CD8-positive, alpha-beta T cell (primary cell): ENCODE measurements at regions of chr14 and their contacts with region 1.

Region 1: GRCh38 chr14:100192672-100193416 is 33.4 kb upstream of the DEGS2 start:
- DNase-seq: peak; percentile 99 to 100 (median 99)
- ATAC-seq: peak; percentile 98
- H3K4me3 ChIP-seq: peak overlapping the region; percentile 54 to 57
- H3K4me3 Mint-ChIP-seq: peak overlapping the region; percentile 63
- H3K27ac ChIP-seq: peak overlapping the region; percentile 48 to 90
- H3K27ac Mint-ChIP-seq: peak overlapping the region; percentile 90
- H3K4me1 ChIP-seq: peaks cover 12% of the 10 kb centered on the region
- H3K4me1 Mint-ChIP-seq: peaks cover 10% of the 10 kb centered on the region
- H3K27me3 ChIP-seq: no peaks in the 10 kb centered on the region
- H3K27me3 Mint-ChIP-seq: no peaks in the 10 kb centered on the region
- CTCF ChIP-seq: peak; percentile 81

Region 2: DNA sequence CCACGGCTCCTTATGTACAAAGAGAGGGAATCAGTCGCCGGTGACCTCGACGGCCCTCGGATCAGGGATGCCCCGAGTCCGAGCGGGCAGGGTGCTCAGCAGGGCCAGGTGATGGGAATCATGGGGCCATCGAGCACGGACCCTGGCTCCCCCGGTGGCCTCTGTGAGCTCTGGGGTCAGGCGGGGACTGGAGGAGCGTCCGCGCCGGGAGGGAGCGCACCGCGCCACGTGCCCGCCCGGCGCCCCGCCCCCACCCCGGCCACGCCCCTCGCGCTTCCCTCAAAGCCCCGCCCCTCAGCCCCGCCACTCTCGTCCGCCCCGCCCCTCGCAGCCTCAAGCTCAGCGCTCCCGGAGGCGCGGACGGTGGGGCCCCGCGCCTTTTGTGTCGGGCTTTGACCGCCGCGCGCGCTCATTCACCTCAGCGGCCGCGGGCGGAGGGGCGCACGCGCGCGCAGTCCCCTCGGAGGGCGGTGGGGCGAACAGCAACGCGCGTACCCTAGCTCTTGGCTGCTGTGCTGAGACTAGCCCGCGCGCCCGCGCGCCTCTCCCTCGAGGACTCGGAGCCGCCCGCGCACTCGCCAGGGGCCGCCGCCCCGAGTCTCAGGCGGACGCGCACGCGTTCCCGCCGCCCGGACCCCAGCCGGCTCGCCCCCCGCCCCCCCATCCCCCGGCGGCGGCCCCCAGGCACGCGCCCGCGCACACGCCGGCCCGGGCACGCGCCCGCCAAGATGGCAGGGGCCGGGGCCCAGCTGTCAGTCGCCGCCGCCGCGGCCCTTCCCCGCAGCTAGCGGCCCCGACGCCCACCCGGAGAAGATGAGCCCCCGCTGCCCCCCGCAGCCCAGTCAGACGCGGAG is 221.5 kb before region 1 on chr14:
- CTCF ChIA-PET with region 1: interaction called, 10 read pairs
- POLR2A ChIA-PET with region 1: no interaction called
- intact Hi-C with region 1: no loop called
- DNase-seq: peak; percentile 62 to 89 (median 78)
- ATAC-seq: peak; percentile 92
- H3K4me3 ChIP-seq: peak overlapping the region; percentile 35 to 67
- H3K4me3 Mint-ChIP-seq: peak overlapping the region; percentile 78
- H3K27ac ChIP-seq: no peak overlapping the region
- H3K27ac Mint-ChIP-seq: no peak overlapping the region
- H3K4me1 ChIP-seq: peaks cover 11% of the 10 kb centered on the region
- H3K4me1 Mint-ChIP-seq: peaks cover 12% of the 10 kb centered on the region
- H3K27me3 ChIP-seq: no peaks in the 10 kb centered on the region
- H3K27me3 Mint-ChIP-seq: peaks cover 5% of the 10 kb centered on the region
- CTCF ChIP-seq: no peak

Region 3: DNA sequence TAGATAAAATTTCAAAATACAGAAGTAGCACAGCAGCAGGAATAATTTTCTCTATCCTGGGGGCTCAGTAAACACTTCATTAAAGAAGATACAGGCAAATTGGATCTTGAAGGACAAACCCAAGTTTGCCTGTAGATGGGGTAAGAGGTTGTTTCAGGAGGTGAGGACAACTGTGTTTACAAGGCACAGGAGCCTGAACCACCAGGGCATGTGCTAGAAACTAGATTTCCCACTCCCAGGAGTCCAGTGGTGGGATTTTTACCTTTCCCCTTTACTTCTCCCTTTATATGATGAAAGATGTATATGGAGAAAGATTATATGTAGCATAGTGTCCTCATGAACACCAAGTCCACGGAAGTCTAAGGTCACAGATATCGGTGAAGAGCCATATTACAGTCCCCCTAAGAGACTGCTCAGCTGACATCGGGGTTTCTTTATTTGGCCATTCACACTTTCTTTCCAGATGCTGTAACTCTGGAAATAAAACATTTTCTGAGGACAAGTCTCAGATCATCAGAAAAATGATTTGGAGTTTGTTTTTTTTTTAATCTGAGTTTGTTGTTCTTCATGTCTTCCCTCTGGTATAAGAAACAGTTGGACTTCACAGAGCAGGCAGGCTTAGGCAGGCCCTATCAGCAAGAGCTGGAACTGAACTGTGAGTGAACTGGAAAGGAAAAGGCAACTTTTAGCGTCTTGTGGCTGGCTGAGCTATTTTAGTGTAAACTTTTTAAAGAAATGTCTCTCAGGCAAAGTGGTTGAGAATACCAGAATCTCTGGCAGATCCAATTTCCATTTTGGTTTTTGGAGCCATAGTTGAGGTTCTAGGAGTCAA is 135.7 kb before region 1 on chr14:
- CTCF ChIA-PET with region 1: interaction called, 7 read pairs
- POLR2A ChIA-PET with region 1: interaction called, 3 read pairs
- intact Hi-C with region 1: loop called (anchors 1 to 2 kb)
- DNase-seq: peak in 4 of 9 experiments; percentile 35 to 84 (median 62)
- ATAC-seq: peak; percentile 71
- H3K4me3 ChIP-seq: no peak overlapping the region
- H3K4me3 Mint-ChIP-seq: peak overlapping the region; percentile 21
- H3K27ac ChIP-seq: peak overlapping the region in 1 of 2 experiments; percentile 12
- H3K27ac Mint-ChIP-seq: peak overlapping the region; percentile 94
- H3K4me1 ChIP-seq: peaks cover 57% of the 10 kb centered on the region
- H3K4me1 Mint-ChIP-seq: peaks cover 54% of the 10 kb centered on the region
- H3K27me3 ChIP-seq: no peaks in the 10 kb centered on the region
- H3K27me3 Mint-ChIP-seq: no peaks in the 10 kb centered on the region
- CTCF ChIP-seq: peak; percentile 77

Region 4: GRCh38 chr14:100108042-100108825 is 84.6 kb before region 1 on chr14:
- CTCF ChIA-PET with region 1: interaction called, 19 read pairs
- POLR2A ChIA-PET with region 1: no interaction called
- intact Hi-C with region 1: loop called (anchors 1 to 2 kb)
- DNase-seq: peak; percentile 80 to 93 (median 88)
- ATAC-seq: peak; percentile 50
- H3K4me3 ChIP-seq: no peak overlapping the region
- H3K4me3 Mint-ChIP-seq: peak overlapping the region; percentile 49
- H3K27ac ChIP-seq: peak overlapping the region; percentile 21 to 59
- H3K27ac Mint-ChIP-seq: peak overlapping the region; percentile 99
- H3K4me1 ChIP-seq: peaks cover 83% of the 10 kb centered on the region
- H3K4me1 Mint-ChIP-seq: peaks cover 88% of the 10 kb centered on the region
- H3K27me3 ChIP-seq: no peaks in the 10 kb centered on the region
- H3K27me3 Mint-ChIP-seq: no peaks in the 10 kb centered on the region
- CTCF ChIP-seq: peak; percentile 83

Region 5: GRCh38 chr14:100203949-100204834 is 11.3 kb after region 1 on chr14:
- CTCF ChIA-PET with region 1: interaction called, 19 read pairs
- POLR2A ChIA-PET with region 1: no interaction called
- intact Hi-C with region 1: no loop called
- DNase-seq: no peak
- ATAC-seq: no peak
- H3K4me3 ChIP-seq: no peak overlapping the region
- H3K4me3 Mint-ChIP-seq: no peak overlapping the region
- H3K27ac ChIP-seq: no peak overlapping the region
- H3K27ac Mint-ChIP-seq: no peak overlapping the region
- H3K4me1 ChIP-seq: no peaks in the 10 kb centered on the region
- H3K4me1 Mint-ChIP-seq: no peaks in the 10 kb centered on the region
- H3K27me3 ChIP-seq: no peaks in the 10 kb centered on the region
- H3K27me3 Mint-ChIP-seq: no peaks in the 10 kb centered on the region
- CTCF ChIP-seq: no peak

Region 6: GRCh38 chr14:100221533-100222223 is 28.8 kb after region 1 on chr14:
- CTCF ChIA-PET with region 1: interaction called, 32 read pairs
- POLR2A ChIA-PET with region 1: interaction called, 5 read pairs
- intact Hi-C with region 1: loop called in 1 of 2 experiments (anchors 1 kb)
- DNase-seq: peak; percentile 40 to 85 (median 74)
- ATAC-seq: peak; percentile 96
- H3K4me3 ChIP-seq: peak overlapping the region; percentile 68 to 95
- H3K4me3 Mint-ChIP-seq: no peak overlapping the region
- H3K27ac ChIP-seq: peak overlapping the region; percentile 76 to 77
- H3K27ac Mint-ChIP-seq: no peak overlapping the region
- H3K4me1 ChIP-seq: peaks cover 45% of the 10 kb centered on the region
- H3K4me1 Mint-ChIP-seq: peaks cover 7% of the 10 kb centered on the region
- H3K27me3 ChIP-seq: no peaks in the 10 kb centered on the region
- H3K27me3 Mint-ChIP-seq: no peaks in the 10 kb centered on the region
- CTCF ChIP-seq: no peak

Region 7: DNA sequence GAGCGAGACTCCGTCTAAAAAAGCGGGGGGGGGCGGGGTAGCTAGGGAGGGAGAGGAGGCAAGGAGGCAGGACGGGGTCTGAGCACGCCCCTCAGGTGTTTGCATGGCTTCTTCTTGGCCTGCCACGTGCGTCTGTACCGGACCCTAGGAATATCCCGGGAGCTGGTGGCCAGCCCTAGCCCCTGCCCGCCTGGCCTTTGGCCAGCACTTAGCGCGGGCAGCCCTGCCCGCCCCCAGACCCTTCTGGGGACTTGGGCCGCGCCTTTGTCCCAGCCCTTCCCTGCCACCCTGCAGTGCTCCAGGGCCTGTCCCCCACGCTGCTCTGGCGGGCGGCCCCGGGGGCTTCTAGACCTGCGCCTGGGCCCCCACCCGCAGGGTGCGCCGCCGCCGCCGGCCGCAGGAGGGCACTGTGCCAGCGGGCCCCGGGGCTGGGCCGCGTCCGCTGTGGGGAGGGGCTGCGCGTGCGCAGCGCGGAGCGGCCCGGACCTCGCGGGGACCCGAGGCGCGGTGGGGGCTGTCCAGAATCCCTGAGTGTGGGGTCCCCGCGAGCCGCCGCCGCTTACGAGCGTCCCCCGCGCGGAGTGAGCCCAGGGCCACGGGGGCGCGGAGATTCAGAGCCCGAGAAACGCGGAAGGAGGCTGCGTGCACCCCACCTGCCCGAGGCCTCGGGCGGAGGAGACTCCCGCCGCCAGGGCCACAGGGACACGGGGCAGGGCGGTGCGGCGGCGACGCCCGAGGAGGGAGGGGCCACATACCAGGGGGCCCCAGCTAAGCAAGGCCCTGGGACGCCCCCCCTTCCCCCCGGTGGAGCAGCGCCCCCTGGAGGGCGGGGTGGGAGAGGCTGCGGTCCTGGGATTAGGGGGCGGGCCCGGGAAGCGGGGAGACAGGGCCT is 92.4 kb after region 1 on chr14:
- CTCF ChIA-PET with region 1: interaction called, 3 read pairs
- POLR2A ChIA-PET with region 1: interaction called, 3 read pairs
- intact Hi-C with region 1: loop called in 1 of 2 experiments (anchors 1 kb)
- DNase-seq: peak; percentile 64 to 88 (median 78)
- ATAC-seq: peak; percentile 91
- H3K4me3 ChIP-seq: peak overlapping the region; percentile 63 to 90
- H3K4me3 Mint-ChIP-seq: peak overlapping the region; percentile 81
- H3K27ac ChIP-seq: peak overlapping the region; percentile 72 to 76
- H3K27ac Mint-ChIP-seq: no peak overlapping the region
- H3K4me1 ChIP-seq: peaks cover 5% of the 10 kb centered on the region
- H3K4me1 Mint-ChIP-seq: peaks cover 11% of the 10 kb centered on the region
- H3K27me3 ChIP-seq: no peaks in the 10 kb centered on the region
- H3K27me3 Mint-ChIP-seq: no peaks in the 10 kb centered on the region
- CTCF ChIP-seq: peak; percentile 96